Uterus (tissue), 4 donors: ENCODE measurements at regions of chr1 and their contacts with region 1.

Region 1: GRCh38 chr1:16243936-16244649 is 7.1 kb upstream of the CPLANE2 start:
- DNase-seq: peak; percentile 83 to 90
- H3K4me3 ChIP-seq: no peak overlapping the region
- H3K27ac ChIP-seq: peak overlapping the region; percentile 90 to 95
- H3K4me1 ChIP-seq: peaks cover 17 to 20% of the 10 kb centered on the region in 2 donors
- H3K27me3 ChIP-seq: no peaks in the 10 kb centered on the region
- CTCF ChIP-seq: peak; percentile 84 to 93 (median 90)
- POLR2A ChIP-seq: peak in 1 of 2 donors; percentile 14

Region 2: DNA sequence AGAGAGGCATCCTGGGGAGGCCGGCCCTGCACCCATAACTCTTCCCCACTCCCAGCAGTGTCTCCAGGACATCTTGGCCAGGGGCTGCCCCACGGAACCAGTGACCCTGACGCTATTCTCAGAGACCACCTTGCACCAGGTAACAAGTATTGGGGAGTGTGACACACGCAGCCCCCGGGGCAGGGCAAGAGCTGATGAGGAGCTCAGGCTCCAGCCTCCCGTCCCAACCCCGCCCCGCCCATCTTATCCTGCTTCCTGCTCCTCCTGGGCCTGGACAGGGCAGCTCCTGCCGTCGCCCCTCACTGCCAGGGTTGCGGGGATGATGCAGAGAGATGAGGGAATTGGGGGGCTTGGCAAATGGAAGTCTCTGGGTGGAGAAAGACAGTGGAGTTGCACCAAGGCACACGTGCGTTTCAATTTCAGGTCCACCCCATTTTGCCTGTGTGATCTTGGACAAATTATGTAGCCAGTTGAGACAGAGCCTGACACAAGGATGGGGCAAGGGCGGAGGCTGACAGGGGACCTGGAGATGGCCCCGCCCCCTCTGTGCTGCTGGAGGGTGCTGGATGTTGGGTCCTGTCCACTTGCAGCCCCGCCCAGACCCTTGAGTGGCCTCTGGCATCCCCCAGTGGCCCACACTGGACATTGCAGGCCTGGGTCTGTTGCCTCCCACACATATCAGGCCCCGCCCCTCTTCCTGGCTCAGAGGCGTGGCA is 211.5 kb before region 1 on chr1:
- intact Hi-C with region 1: no loop called
- DNase-seq: peak; percentile 88
- H3K4me3 ChIP-seq: no peak overlapping the region
- H3K27ac ChIP-seq: no peak overlapping the region
- H3K4me1 ChIP-seq: no peaks in the 10 kb centered on the region
- H3K27me3 ChIP-seq: no peaks in the 10 kb centered on the region
- CTCF ChIP-seq: peak; percentile 93 to 99 (median 98)
- POLR2A ChIP-seq: peak in 1 of 2 donors; percentile 8

Region 3: DNA sequence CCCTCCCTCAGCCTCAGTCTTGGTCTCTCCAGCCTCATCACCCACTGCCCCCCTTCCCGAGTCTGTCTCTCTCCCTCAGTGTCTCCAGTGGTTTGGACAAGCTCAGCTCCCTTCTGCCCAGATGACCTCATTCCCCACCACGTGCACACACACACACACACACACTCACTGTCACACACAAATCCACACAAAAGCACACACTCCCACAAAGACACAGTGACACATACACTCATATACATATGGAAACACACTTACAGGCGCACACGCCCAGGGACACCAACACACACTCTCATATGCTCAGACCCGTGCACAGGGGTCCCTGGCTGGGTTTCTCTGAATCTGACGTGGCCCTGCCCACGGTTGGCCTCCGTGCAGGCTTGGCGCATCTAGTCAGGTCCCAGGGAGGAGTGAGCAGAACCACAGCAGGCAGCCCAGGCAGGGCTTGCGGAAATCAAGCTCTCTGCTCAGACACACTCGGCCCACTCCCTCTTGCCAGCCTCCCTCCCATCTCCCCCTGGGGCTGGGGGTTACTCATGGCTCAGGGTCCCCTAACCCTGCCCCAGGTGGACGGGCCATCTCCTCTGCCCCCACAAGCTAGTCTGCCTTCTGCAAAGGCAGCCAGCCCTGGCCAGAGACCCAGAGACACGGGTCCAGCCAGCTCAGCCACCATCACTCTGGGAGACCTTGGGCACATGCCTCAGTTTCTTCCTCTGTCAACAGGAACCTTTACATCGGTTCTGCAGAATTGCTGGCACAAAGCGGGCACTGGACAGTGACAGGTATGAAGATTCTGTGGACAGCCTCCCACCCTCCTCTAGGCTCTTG is 132.1 kb before region 1 on chr1:
- intact Hi-C with region 1: no loop called
- DNase-seq: peak; percentile 55 to 76
- H3K4me3 ChIP-seq: no peak overlapping the region
- H3K27ac ChIP-seq: peak overlapping the region; percentile 46 to 87
- H3K4me1 ChIP-seq: peaks cover 0 to 10% of the 10 kb centered on the region in 2 donors
- H3K27me3 ChIP-seq: no peaks in the 10 kb centered on the region
- CTCF ChIP-seq: no peak
- POLR2A ChIP-seq: no peak

Region 4: GRCh38 chr1:16351994-16352841 is 108.1 kb after region 1 on chr1 and contains the start of gene FBXO42:
- intact Hi-C with region 1: loop called (anchors 10 kb)
- DNase-seq: peak; percentile 89 to 93
- H3K4me3 ChIP-seq: peak within 1 kb of the TSS; percentile 86 to 95
- H3K27ac ChIP-seq: peak within 1 kb of the TSS; percentile 93
- H3K4me1 ChIP-seq: peaks cover 0 to 7% of the 10 kb centered on the region in 2 donors
- H3K27me3 ChIP-seq: no peaks in the 10 kb centered on the region
- CTCF ChIP-seq: peak; percentile 10 to 74 (median 62)
- POLR2A ChIP-seq: peak; percentile 97 to 98
- total RNA-seq, gene FBXO42: 21.0 to 30.3 (median 23.0) TPM